ENCODE measurements at regions of chr1 and their contacts with region 1.

Region 1: GRCh38 chr1:185559684-185560331 is 174.4 kb upstream of the HMCN1 start:
- DNase-seq: peak; percentile 74
- H3K4me3 Mint-ChIP-seq: peak overlapping the region; percentile 52
- H3K27ac Mint-ChIP-seq: peak overlapping the region; percentile 66
- H3K4me1 Mint-ChIP-seq: peaks cover 52% of the 10 kb centered on the region
- H3K27me3 Mint-ChIP-seq: no peaks in the 10 kb centered on the region

Region 2: GRCh38 chr1:185338719-185339622 is 220.8 kb before region 1 on chr1:
- intact Hi-C with region 1: loop called (anchors 1 kb)
- DNase-seq: peak; percentile 63
- H3K4me3 Mint-ChIP-seq: peak overlapping the region; percentile 13
- H3K27ac Mint-ChIP-seq: peak overlapping the region; percentile 78
- H3K4me1 Mint-ChIP-seq: peaks cover 43% of the 10 kb centered on the region
- H3K27me3 Mint-ChIP-seq: no peaks in the 10 kb centered on the region

Region 3: DNA sequence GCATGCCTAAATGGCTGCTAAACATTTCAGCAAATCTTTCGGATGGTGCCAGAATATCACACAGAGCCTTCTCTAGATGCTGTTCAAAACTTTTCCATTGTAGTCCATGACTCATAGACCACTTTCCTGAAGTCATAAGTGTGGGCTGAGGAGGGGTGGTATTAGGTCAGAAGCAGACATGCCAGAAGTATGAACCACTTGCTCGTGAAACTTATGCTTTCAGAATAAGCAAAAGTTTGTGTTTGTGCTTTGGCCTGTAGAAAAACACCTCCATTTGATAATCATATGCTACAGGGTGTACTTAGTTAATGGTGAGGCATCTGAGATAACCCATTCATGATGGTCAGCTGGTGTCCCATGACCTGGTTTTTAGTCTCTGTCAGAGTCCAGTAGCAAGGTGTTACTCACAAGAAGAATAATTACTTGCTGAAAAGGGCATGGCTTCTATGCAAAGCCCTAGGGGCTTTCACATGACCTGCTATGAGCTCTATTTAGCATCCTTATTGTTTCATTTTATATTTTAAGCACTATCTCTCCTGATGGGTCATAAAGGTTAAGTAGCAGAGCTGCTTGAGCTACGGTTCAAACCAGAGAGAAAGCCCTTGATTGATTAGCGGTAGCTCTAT is 59.7 kb before region 1 on chr1:
- intact Hi-C with region 1: loop called (anchors 5 kb)
- DNase-seq: no peak
- H3K4me3 Mint-ChIP-seq: no peak overlapping the region
- H3K27ac Mint-ChIP-seq: peak overlapping the region; percentile 43
- H3K4me1 Mint-ChIP-seq: peaks cover 36% of the 10 kb centered on the region
- H3K27me3 Mint-ChIP-seq: peaks cover 3% of the 10 kb centered on the region

Region 4: DNA sequence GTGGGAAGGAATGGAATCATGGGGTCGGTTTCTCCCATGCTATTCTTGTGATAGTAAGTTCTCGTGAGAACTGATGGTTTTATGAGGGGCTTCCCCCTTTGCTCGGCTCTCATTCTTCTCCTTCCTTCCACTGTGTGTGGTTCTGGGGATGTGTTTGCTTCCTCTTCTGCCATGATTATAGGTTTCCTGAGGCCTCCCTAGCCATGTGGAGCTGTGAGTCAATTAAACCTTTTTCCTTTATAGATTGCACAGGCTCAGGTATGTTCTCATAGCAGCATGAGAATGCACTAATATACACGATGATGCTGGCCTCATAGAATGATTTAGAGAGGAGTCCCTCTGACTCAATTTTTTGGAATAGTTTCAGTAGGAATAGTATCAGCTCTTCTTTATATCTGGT is 47.4 kb before region 1 on chr1:
- intact Hi-C with region 1: no loop called
- DNase-seq: no peak
- H3K4me3 Mint-ChIP-seq: no peak overlapping the region
- H3K27ac Mint-ChIP-seq: no peak overlapping the region
- H3K4me1 Mint-ChIP-seq: peaks cover 13% of the 10 kb centered on the region
- H3K27me3 Mint-ChIP-seq: no peaks in the 10 kb centered on the region

Region 5: DNA sequence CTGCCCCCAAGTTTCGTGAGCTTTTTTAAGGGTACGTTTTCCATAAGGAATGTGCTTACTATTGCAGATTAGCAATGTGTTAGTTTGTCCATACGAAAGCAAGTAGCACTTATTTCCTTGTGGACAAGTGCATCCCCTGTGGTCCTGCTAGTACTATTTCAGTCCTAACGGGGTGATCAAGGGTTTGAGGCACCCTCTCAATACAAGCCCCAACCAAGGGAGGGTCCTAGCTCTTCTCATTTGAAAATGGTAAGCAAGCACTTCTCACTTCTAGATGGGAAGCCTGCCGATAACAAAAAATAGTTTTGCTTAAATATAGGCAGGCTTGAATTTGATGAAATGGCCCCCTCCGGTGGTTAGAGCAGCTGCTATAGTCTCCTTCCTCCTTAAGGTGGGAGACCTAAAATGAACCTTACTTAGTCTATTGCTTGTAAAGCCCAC is 110.4 kb after region 1 on chr1:
- intact Hi-C with region 1: loop called (anchors 2 kb)
- DNase-seq: peak; percentile 28
- H3K4me3 Mint-ChIP-seq: no peak overlapping the region
- H3K27ac Mint-ChIP-seq: no peak overlapping the region
- H3K4me1 Mint-ChIP-seq: peaks cover 39% of the 10 kb centered on the region
- H3K27me3 Mint-ChIP-seq: peaks cover 2% of the 10 kb centered on the region

Measured in activated T-helper 1 cell treated with anti-CD3 and anti-CD28 coated beads, Interleukin-12 subunit alpha, Interleukin-12 subunit beta, Interleukin-2, Interleukin-4 antibody, amounts not matched to agents 30 ng/mL and 10 ng/mL and 1 ng/mL, durations not matched to agents 14 hours and 24 hours and 36 hours (primary cell).